PC-9 (cell line): ENCODE measurements at regions of chr17 and their contacts with region 1.

Region 1: DNA sequence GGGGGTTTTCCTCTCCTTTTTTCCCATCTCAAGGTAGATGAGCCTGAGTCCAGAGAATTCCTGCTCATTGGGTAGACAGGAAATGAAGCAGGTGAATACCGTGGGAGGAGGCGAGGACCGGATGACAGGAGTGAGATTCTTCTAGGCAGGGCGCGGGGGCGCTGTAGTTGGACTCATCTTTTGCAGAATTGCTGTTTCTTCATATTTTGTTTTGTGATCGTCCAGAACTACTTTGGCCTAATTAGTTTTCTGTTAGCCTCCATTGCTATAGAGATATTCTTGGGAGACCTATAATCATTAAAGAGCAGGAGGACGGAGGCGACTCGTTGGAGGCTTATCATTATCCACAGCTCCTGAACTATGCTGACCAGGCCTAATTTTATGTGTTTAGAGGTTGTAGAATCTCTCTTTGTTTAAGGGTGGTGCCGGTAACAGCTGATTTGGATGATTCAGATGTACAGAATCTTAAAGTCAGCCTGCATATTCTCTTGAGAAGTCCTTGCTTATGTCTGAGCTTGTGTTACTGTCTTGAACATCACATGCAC is 650 bp downstream of the ATP6V0A1 start:
- DNase-seq: peak; percentile 6 to 64
- H3K4me3 ChIP-seq: peak overlapping the region; percentile 77
- H3K27ac ChIP-seq: peak overlapping the region; percentile 78
- H3K4me1 ChIP-seq: peaks cover 41% of the 10 kb centered on the region
- H3K27me3 ChIP-seq: no peaks in the 10 kb centered on the region
- CTCF ChIP-seq: peak; percentile 44; the same call in 1 of the 2 replicates

Region 2: GRCh38 chr17:42428141-42428944 is 31.0 kb before region 1 on chr17:
- CTCF ChIA-PET with region 1: interaction called, 3 read pairs
- POLR2A ChIA-PET with region 1: no interaction called
- intact Hi-C with region 1: loop called (anchors 1 kb)
- DNase-seq: peak; percentile 67 to 98
- H3K4me3 ChIP-seq: no peak overlapping the region
- H3K27ac ChIP-seq: peak overlapping the region; percentile 73
- H3K4me1 ChIP-seq: peaks cover 34% of the 10 kb centered on the region
- H3K27me3 ChIP-seq: no peaks in the 10 kb centered on the region
- CTCF ChIP-seq: peak; percentile 86